T-cell (primary cell): ENCODE measurements at regions of chr15 and their contacts with region 1.

Region 1: DNA sequence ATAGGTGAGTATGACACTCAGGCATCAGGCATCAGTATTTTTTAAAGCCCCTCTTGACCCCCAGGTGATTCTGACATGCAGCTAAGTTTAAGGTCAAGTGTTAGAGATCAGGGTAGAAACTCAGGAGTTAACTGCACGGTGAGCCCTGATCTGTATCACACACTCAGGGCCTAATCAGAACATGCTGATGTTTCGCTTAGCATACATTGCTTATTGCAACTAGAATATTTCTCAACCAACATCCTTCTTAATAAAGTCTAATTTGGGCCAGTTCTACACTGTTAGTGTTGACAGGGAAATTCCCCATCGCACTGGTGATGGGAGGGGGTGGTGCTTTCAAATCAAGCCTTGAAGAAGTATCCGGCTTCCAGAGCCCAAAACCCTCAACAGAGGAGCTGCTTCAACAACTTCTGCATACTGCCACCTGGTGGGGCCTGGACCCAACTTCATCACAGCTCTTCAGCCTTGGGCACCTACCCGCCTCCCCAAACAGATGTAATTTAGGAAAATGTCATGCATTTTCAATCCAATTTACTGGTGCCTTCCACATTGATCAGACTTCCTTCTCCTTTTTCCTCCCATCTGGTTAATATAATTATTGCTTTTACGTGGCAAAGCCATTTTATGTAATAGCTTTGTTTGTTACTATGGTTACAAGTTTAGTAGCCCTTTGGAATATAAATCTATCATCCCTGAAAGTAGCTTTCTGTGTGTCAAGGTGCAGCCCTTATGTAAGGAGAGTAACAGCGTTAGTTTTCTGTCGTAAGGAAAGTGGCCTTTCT is 312.2 kb downstream of the RORA start:
- DNase-seq: peak; percentile 73 to 95 (median 87)
- ATAC-seq: peak; percentile 94 to 99 (median 98)
- H3K4me3 ChIP-seq: no peak overlapping the region
- H3K4me3 Mint-ChIP-seq: no peak overlapping the region
- H3K27ac ChIP-seq: peak overlapping the region; percentile 48
- H3K27ac Mint-ChIP-seq: peak overlapping the region; percentile 65 to 69
- H3K4me1 ChIP-seq: peaks cover 3 to 8% of the 10 kb centered on the region in 2 experiments
- H3K4me1 Mint-ChIP-seq: peaks cover 6 to 15% (median 9%) of the 10 kb centered on the region in 3 donors
- H3K27me3 ChIP-seq: peaks cover 0 to 3% of the 10 kb centered on the region in 2 experiments
- H3K27me3 Mint-ChIP-seq: peaks cover 0 to 1% of the 10 kb centered on the region in 2 donors

Region 2: DNA sequence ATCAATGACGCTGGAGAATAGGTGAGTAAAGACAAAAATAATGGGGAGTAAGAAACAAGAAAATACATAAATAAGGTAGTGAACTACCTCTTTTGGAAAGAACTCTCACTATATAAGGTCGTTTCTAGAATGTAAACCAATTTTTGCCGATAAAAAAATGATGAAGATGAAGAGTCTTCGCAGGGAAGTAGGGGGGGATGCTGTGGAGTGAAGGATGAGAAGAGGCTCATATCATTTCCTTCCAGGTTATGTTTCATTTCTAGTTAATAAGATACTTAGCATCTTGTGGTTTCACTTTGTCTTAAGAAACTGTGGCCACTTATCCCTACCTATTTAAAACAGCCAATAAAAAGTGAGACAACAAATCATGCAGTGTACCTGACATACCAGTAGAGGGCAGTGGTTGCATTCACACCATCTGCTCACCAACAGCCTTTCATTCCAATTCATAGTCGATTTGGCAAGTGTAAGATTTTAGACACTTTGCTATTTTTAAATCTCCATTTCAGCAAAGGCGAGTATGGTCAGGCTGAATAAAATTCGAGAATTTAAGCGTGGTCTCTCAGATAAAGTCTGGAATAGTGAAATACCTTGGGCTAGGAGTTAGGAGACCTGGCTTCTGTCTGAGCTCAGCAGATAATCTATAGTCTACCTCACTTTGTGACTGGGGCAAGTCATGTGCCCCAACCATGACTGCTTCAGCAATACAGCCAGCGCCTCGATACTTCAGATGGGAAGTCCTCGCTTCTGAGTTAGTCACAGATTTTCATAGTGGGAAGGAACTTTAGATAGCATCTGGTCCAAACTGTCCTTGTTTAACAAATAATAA is 409.1 kb before region 1 on chr15:
- CTCF ChIA-PET with region 1: interaction called, 7 to 17 read pairs
- POLR2A ChIA-PET with region 1: interaction called in 1 of 2 experiments, 3 read pairs
- DNase-seq: peak in 31 of 35 experiments; percentile 8 to 88 (median 41)
- ATAC-seq: peak; percentile 74 to 82 (median 76)
- H3K4me3 ChIP-seq: no peak overlapping the region
- H3K4me3 Mint-ChIP-seq: peak overlapping the region in 1 of 3 donors; percentile 37
- H3K27ac ChIP-seq: peak overlapping the region; percentile 53
- H3K27ac Mint-ChIP-seq: peak overlapping the region; percentile 78 to 84
- H3K4me1 ChIP-seq: peaks cover 0 to 20% of the 10 kb centered on the region in 2 experiments
- H3K4me1 Mint-ChIP-seq: peaks cover 53 to 59% (median 59%) of the 10 kb centered on the region in 3 donors
- H3K27me3 ChIP-seq: no peaks in the 10 kb centered on the region
- H3K27me3 Mint-ChIP-seq: no peaks in the 10 kb centered on the region

Region 3: GRCh38 chr15:60649845-60650548 is 266.9 kb before region 1 on chr15:
- CTCF ChIA-PET with region 1: interaction called in 1 of 2 experiments, 13 read pairs
- POLR2A ChIA-PET with region 1: no interaction called
- DNase-seq: peak in 32 of 35 experiments; percentile 4 to 80 (median 22)
- ATAC-seq: peak; percentile 80 to 93 (median 88)
- H3K4me3 ChIP-seq: peak overlapping the region in 1 of 2 donors; percentile 25
- H3K4me3 Mint-ChIP-seq: peak overlapping the region; percentile 58 to 78 (median 68)
- H3K27ac ChIP-seq: peak overlapping the region; percentile 83
- H3K27ac Mint-ChIP-seq: peak overlapping the region; percentile 93 to 96
- H3K4me1 ChIP-seq: peaks cover 22 to 29% of the 10 kb centered on the region in 2 experiments
- H3K4me1 Mint-ChIP-seq: peaks cover 40 to 56% (median 41%) of the 10 kb centered on the region in 3 donors
- H3K27me3 ChIP-seq: no peaks in the 10 kb centered on the region
- H3K27me3 Mint-ChIP-seq: no peaks in the 10 kb centered on the region

Region 4: GRCh38 chr15:60844511-60845174 is 72.2 kb before region 1 on chr15:
- CTCF ChIA-PET with region 1: interaction called in 1 of 2 experiments, 18 read pairs
- POLR2A ChIA-PET with region 1: interaction called in 1 of 2 experiments, 4 read pairs
- DNase-seq: peak; percentile 39 to 90 (median 70)
- ATAC-seq: peak; percentile 85 to 89 (median 88)
- H3K4me3 ChIP-seq: peak overlapping the region; percentile 21 to 53
- H3K4me3 Mint-ChIP-seq: peak overlapping the region; percentile 67 to 71 (median 69)
- H3K27ac ChIP-seq: peak overlapping the region; percentile 92
- H3K27ac Mint-ChIP-seq: peak overlapping the region; percentile 95 to 99
- H3K4me1 ChIP-seq: peaks cover 59 to 72% of the 10 kb centered on the region in 2 experiments
- H3K4me1 Mint-ChIP-seq: peaks cover 84 to 88% (median 85%) of the 10 kb centered on the region in 3 donors
- H3K27me3 ChIP-seq: no peaks in the 10 kb centered on the region
- H3K27me3 Mint-ChIP-seq: no peaks in the 10 kb centered on the region

Region 5: DNA sequence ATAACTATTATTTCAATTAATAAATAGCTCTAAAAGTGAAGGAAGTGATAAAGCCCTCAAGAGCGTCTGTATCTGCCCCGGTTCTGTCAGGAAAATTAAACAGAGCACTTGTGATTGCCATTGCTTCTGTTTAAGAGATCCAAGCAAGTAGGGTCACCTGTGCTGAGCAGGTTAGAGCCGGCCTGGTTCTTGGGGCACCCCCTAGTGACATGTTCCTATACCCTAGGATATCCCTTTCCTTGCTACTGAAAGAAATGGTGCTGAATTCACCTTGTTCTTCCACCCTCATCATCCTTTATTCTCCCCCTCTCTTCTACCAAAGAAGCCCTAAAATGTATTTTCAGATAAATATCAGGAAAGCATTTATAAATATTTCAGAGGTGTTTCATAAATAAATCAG is 11.3 kb before region 1 on chr15:
- CTCF ChIA-PET with region 1: interaction called, 4 to 11 read pairs
- POLR2A ChIA-PET with region 1: no interaction called
- DNase-seq: peak in 27 of 35 experiments; percentile 3 to 59 (median 24)
- ATAC-seq: peak; percentile 63 to 80 (median 76)
- H3K4me3 ChIP-seq: no peak overlapping the region
- H3K4me3 Mint-ChIP-seq: no peak overlapping the region
- H3K27ac ChIP-seq: no peak overlapping the region
- H3K27ac Mint-ChIP-seq: no peak overlapping the region
- H3K4me1 ChIP-seq: peaks cover 0 to 5% of the 10 kb centered on the region in 2 experiments
- H3K4me1 Mint-ChIP-seq: peaks cover 14 to 31% (median 22%) of the 10 kb centered on the region in 3 donors
- H3K27me3 ChIP-seq: no peaks in the 10 kb centered on the region
- H3K27me3 Mint-ChIP-seq: no peaks in the 10 kb centered on the region

Region 6: DNA sequence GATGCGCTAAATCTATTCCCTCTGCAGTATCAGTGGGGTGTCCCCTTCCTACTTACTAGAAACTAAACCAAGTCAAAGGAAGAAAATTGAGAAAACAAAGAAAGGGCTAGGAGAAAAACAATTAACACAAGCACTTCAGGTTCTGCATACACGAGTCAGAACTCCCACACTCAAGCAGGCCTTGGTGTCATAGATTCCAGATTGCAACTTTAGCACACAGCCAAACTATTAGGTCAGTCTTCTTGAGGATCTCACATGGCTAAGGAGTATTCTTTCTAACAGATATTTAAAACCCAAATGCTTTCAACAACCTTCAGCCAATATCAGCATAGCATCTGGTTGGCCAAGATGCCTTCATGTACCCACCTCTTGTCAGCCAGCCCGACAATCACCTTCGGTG is 803.3 kb after region 1 on chr15:
- CTCF ChIA-PET with region 1: no interaction called
- POLR2A ChIA-PET with region 1: no interaction called
- DNase-seq: no peak
- ATAC-seq: no peak
- H3K4me3 ChIP-seq: no peak overlapping the region
- H3K4me3 Mint-ChIP-seq: no peak overlapping the region
- H3K27ac ChIP-seq: no peak overlapping the region
- H3K27ac Mint-ChIP-seq: no peak overlapping the region
- H3K4me1 ChIP-seq: no peaks in the 10 kb centered on the region
- H3K4me1 Mint-ChIP-seq: no peaks in the 10 kb centered on the region
- H3K27me3 ChIP-seq: peaks cover 0 to 10% of the 10 kb centered on the region in 2 experiments
- H3K27me3 Mint-ChIP-seq: peaks cover 26 to 43% of the 10 kb centered on the region in 2 donors